ENCODE measurements at regions of chr16 and their contacts with region 1.

Region 1: GRCh38 chr16:48123104-48123788 is 32.5 kb downstream of the ABCC12 start:
- DNase-seq: peak; percentile 98
- ATAC-seq: peak; percentile 76
- H3K4me3 ChIP-seq: no peak overlapping the region
- H3K27ac ChIP-seq: peak overlapping the region; percentile 99
- H3K4me1 ChIP-seq: peaks cover 52% of the 10 kb centered on the region
- H3K27me3 ChIP-seq: no peaks in the 10 kb centered on the region
- CTCF ChIP-seq: no peak

Region 2: GRCh38 chr16:46709469-46710005 is 1413.7 kb before region 1 on chr16:
- CTCF ChIA-PET with region 1: no interaction called
- POLR2A ChIA-PET with region 1: interaction called, 11 read pairs
- intact Hi-C with region 1: no loop called
- DNase-seq: no peak
- ATAC-seq: no peak
- H3K4me3 ChIP-seq: no peak overlapping the region
- H3K27ac ChIP-seq: no peak overlapping the region
- H3K4me1 ChIP-seq: no peaks in the 10 kb centered on the region
- H3K27me3 ChIP-seq: no peaks in the 10 kb centered on the region
- CTCF ChIP-seq: no peak

Region 3: GRCh38 chr16:48076455-48077012 is 46.7 kb before region 1 on chr16:
- CTCF ChIA-PET with region 1: no interaction called
- POLR2A ChIA-PET with region 1: no interaction called
- intact Hi-C with region 1: loop called (anchors 2 kb)
- DNase-seq: peak; percentile 68
- ATAC-seq: peak; percentile 75
- H3K4me3 ChIP-seq: no peak overlapping the region
- H3K27ac ChIP-seq: peak overlapping the region; percentile 96
- H3K4me1 ChIP-seq: peaks cover 29% of the 10 kb centered on the region
- H3K27me3 ChIP-seq: no peaks in the 10 kb centered on the region
- CTCF ChIP-seq: no peak

Region 4: DNA sequence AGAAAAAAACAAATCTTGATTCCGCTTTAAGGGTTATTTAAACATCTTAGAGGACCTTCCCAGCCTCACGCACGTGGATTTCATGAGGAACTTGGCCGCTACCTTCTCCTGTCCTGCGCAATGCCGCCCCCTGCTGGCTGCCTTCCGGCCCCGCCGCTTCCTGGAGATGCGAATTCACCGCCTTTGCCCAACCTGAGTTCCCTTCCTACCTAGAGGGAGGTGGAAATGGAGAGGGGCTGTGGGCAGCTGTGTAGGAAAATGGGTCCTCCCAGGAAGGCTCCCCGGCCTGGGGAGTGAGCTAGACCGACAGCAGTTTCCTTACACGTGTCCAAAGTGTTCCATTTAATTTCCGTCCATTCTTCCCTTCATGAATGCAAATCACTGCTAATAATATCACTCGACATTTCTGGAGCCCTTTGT is 33.6 kb after region 1 on chr16:
- CTCF ChIA-PET with region 1: no interaction called
- POLR2A ChIA-PET with region 1: no interaction called
- intact Hi-C with region 1: loop called (anchors 2 kb)
- DNase-seq: peak; percentile 80
- ATAC-seq: peak; percentile 70
- H3K4me3 ChIP-seq: no peak overlapping the region
- H3K27ac ChIP-seq: peak overlapping the region; percentile 74
- H3K4me1 ChIP-seq: peaks cover 25% of the 10 kb centered on the region
- H3K27me3 ChIP-seq: no peaks in the 10 kb centered on the region
- CTCF ChIP-seq: peak; percentile 80

Region 5: GRCh38 chr16:48373258-48374029 is 250.2 kb after region 1 on chr16:
- CTCF ChIA-PET with region 1: no interaction called
- POLR2A ChIA-PET with region 1: no interaction called
- intact Hi-C with region 1: no loop called
- DNase-seq: no peak
- ATAC-seq: no peak
- H3K4me3 ChIP-seq: no peak overlapping the region
- H3K27ac ChIP-seq: no peak overlapping the region
- H3K4me1 ChIP-seq: peaks cover 6% of the 10 kb centered on the region; the same call in 1 of the 2 replicates
- H3K27me3 ChIP-seq: no peaks in the 10 kb centered on the region
- CTCF ChIP-seq: no peak